Right ventricle myocardium inferior (tissue), 1 donor: ENCODE measurements at regions of chr15 and their contacts with region 1.

Region 1: GRCh38 chr15:69576035-69576526 is 123.5 kb downstream of the RPLP1 start:
- DNase-seq: no peak
- ATAC-seq: peak; percentile 72

Region 2: GRCh38 chr15:69410290-69410874 is 165.7 kb before region 1 on chr15:
- intact Hi-C with region 1: no loop called
- DNase-seq: no peak
- ATAC-seq: no peak

Region 3: DNA sequence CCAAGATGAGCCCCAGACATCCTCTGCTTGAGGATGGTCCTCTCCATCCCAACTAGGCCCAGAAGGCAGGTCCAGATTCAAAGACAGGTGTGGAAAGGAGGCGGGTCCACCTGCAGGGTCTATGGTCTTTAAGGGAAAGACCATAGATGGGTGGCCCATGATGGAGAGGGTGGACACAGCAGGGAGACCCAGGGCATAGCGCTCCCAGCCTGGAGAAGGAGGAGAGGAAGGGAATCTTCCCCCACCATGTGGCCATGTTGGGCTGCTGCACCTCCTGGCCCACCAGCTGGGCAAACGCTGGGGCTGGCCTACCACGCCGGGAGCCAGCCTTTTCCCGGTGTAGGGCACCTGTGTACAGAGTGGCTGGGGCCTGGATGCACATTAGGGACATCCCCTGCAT is 786.8 kb after region 1 on chr15:
- intact Hi-C with region 1: loop called (anchors 10 kb)
- DNase-seq: peak; percentile 37
- ATAC-seq: peak; percentile 74

Region 4: DNA sequence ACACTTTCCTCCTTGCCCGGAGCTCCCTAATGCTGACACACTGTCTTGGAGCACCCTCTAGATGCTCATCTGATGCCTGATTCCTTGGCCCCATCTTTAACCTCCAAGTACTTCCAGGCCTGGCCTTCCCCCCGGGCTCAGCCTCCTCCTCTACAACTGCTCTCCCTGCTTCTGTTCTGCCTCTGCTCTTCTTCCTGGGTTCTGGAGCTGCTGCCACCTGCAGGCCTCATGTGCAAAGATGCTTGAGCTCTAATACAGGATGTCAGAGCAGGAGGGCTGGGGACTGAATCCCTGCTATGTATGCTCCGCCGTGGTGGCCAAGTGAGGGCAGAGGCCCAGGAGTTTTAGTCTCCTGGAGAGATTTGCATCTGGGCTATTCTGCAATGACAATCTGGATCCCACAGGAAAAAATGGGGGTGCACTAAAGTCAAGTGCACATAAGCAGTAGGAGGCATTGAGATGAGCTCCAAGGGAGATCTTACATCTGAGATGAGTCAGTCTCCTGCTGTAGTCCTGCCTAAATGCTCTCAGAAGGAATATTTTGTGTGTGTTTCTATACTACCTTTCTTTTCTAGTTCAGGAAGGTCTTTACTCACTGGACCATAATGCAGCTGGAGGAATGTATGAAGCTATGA is 890.9 kb after region 1 on chr15:
- intact Hi-C with region 1: loop called (anchors 5 kb)
- DNase-seq: no peak
- ATAC-seq: no peak

Region 5: GRCh38 chr15:70488002-70488605 is 912.0 kb after region 1 on chr15:
- intact Hi-C with region 1: loop called (anchors 5 kb)
- DNase-seq: no peak
- ATAC-seq: peak; percentile 46